MCF 10A (cell line): ENCODE measurements at regions of chr6 and their contacts with region 1.

Region 1: DNA sequence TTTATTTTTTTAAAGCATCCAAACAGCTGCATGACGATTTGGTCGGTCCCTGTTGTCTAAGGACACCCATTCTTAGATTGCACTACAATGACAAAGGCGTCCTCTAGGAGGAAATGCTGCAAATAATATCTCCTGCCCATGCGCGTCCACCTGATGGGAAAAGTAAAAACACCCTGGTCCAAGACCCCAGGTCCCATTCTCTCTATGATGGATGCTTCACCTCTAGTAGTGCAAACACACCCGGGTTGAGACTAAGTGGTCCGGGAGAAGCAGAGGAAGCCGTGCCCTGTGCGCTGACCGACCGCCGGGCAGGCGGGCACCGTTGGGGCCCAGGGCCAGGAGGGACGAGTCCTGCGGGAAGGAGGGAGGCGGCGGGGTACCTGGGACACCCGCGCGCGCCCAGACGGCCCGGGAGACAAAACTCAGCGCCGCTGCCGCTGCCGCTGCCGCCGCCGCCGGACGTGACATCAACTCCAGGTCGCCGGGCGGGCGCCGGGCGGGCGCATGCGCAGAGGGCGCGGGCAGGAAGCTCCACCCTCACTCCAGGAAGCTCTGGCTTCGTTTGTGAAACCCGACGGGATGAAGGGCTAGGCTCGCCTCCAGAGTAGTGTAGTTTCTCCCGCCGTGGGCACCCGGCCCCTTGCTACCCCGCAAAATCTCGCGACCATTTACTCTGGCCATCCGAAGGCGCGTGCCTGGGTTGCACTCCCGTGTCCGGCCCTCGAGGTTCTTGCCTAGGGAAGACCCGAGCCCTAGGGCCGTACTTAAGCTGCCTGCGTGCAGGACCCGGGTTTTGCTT is at the start of gene TBC1D7:
- DNase-seq: peak; percentile 92
- H3K4me3 Mint-ChIP-seq: peak within 1 kb of the TSS; percentile 88
- H3K27ac Mint-ChIP-seq: peak within 1 kb of the TSS; percentile 79
- H3K4me1 Mint-ChIP-seq: no peaks in the 10 kb centered on the region
- H3K27me3 Mint-ChIP-seq: no peaks in the 10 kb centered on the region
- CTCF ChIP-seq: no peak
- total RNA-seq, gene TBC1D7: 19.5 and 28.5 TPM in 2 replicates

Region 2: GRCh38 chr6:12648171-12648570 is 680.1 kb before region 1 on chr6:
- CTCF ChIA-PET with region 1: no interaction called
- POLR2A ChIA-PET with region 1: no interaction called
- intact Hi-C with region 1: no loop called
- DNase-seq: no peak
- H3K4me3 Mint-ChIP-seq: no peak overlapping the region
- H3K27ac Mint-ChIP-seq: no peak overlapping the region
- H3K4me1 Mint-ChIP-seq: no peaks in the 10 kb centered on the region
- H3K27me3 Mint-ChIP-seq: peaks cover 36% of the 10 kb centered on the region
- CTCF ChIP-seq: no peak

Region 3: DNA sequence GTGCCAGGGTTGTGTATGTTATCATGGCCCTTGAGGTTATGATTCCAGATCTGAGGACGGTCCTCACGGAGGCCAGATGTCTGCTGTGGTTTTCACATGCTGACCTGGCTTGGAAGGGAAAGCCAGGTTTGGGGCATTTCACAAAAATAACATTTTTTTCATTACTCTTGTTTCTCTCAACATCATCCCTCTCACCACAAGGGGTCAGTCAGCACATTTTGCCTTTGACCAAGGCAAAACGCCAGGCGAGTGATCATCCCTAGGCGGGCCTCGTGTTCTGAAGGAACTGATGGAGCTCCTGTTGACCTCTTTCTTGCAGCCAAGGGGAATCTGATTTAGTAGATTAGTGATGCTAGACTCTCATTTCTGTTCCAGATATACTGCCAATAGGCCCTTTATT is 133.4 kb before region 1 on chr6:
- CTCF ChIA-PET with region 1: interaction called, 33 read pairs
- POLR2A ChIA-PET with region 1: interaction called, 4 read pairs
- intact Hi-C with region 1: no loop called
- DNase-seq: peak; percentile 68
- H3K4me3 Mint-ChIP-seq: no peak overlapping the region
- H3K27ac Mint-ChIP-seq: no peak overlapping the region
- H3K4me1 Mint-ChIP-seq: no peaks in the 10 kb centered on the region
- H3K27me3 Mint-ChIP-seq: peaks cover 45% of the 10 kb centered on the region
- CTCF ChIP-seq: peak; percentile 49

Region 4: GRCh38 chr6:13268913-13269518 is 59.3 kb before region 1 on chr6:
- CTCF ChIA-PET with region 1: interaction called, 5 read pairs
- POLR2A ChIA-PET with region 1: interaction called, 12 read pairs
- intact Hi-C with region 1: no loop called
- DNase-seq: peak; percentile 60
- H3K4me3 Mint-ChIP-seq: no peak overlapping the region
- H3K27ac Mint-ChIP-seq: no peak overlapping the region
- H3K4me1 Mint-ChIP-seq: peaks cover 23% of the 10 kb centered on the region
- H3K27me3 Mint-ChIP-seq: no peaks in the 10 kb centered on the region
- CTCF ChIP-seq: no peak

Region 5: GRCh38 chr6:13311155-13311554 is 17.1 kb before region 1 on chr6:
- CTCF ChIA-PET with region 1: interaction called, 6 read pairs
- POLR2A ChIA-PET with region 1: interaction called, 15 read pairs
- intact Hi-C with region 1: loop called (anchors 1 kb)
- DNase-seq: no peak
- H3K4me3 Mint-ChIP-seq: no peak overlapping the region
- H3K27ac Mint-ChIP-seq: no peak overlapping the region
- H3K4me1 Mint-ChIP-seq: peaks cover 12% of the 10 kb centered on the region
- H3K27me3 Mint-ChIP-seq: no peaks in the 10 kb centered on the region
- CTCF ChIP-seq: no peak

Region 6: GRCh38 chr6:13433709-13434121 is 105.4 kb after region 1 on chr6:
- CTCF ChIA-PET with region 1: no interaction called
- POLR2A ChIA-PET with region 1: no interaction called
- intact Hi-C with region 1: no loop called
- DNase-seq: no peak
- H3K4me3 Mint-ChIP-seq: no peak overlapping the region
- H3K27ac Mint-ChIP-seq: no peak overlapping the region
- H3K4me1 Mint-ChIP-seq: peaks cover 18% of the 10 kb centered on the region
- H3K27me3 Mint-ChIP-seq: no peaks in the 10 kb centered on the region
- CTCF ChIP-seq: no peak

Region 7: GRCh38 chr6:13487122-13488014 is 159.1 kb after region 1 on chr6 and contains the start of gene GFOD1:
- CTCF ChIA-PET with region 1: interaction called, 3 read pairs
- POLR2A ChIA-PET with region 1: interaction called, 22 read pairs
- intact Hi-C with region 1: no loop called
- DNase-seq: peak; percentile 88
- H3K4me3 Mint-ChIP-seq: peak within 1 kb of the TSS; percentile 78
- H3K27ac Mint-ChIP-seq: peak within 1 kb of the TSS; percentile 50
- H3K4me1 Mint-ChIP-seq: peaks cover 23% of the 10 kb centered on the region
- H3K27me3 Mint-ChIP-seq: no peaks in the 10 kb centered on the region
- CTCF ChIP-seq: peak; percentile 23
- total RNA-seq, gene GFOD1: 7.1 and 9.5 TPM in 2 replicates